IMR-90 (cell line): ENCODE measurements at regions of chr2 and their contacts with region 1.

Region 1: GRCh38 chr2:97995734-97996624 is at the start of gene TMEM131:
- DNase-seq: peak; percentile 93
- ATAC-seq: peak; percentile 95
- H3K4me3 ChIP-seq: peak within 1 kb of the TSS; percentile 87
- H3K27ac ChIP-seq: peak within 1 kb of the TSS; percentile 98
- H3K4me1 ChIP-seq: peaks cover 2% of the 10 kb centered on the region; the same call in 1 of the 2 replicates
- H3K27me3 ChIP-seq: no peaks in the 10 kb centered on the region
- CTCF ChIP-seq: no peak
- POLR2A ChIP-seq: no peak
- RAD21 ChIP-seq: 0 out of 2 replicates have a peak, but pooled peaks have one; percentile 8
- total RNA-seq, gene TMEM131: 13.3 and 18.9 TPM in 2 replicates

Region 2: GRCh38 chr2:97697252-97698235 is 298.4 kb before region 1 on chr2:
- CTCF ChIA-PET with region 1: no interaction called
- POLR2A ChIA-PET with region 1: no interaction called
- dilution Hi-C with region 1: no loop called
- in situ Hi-C with region 1: no loop called
- intact Hi-C with region 1: loop called (anchors 5 kb)
- DNase-seq: peak; percentile 69
- ATAC-seq: peak; percentile 88
- H3K4me3 ChIP-seq: no peak overlapping the region; the same call in 1 of the 2 replicates
- H3K27ac ChIP-seq: no peak overlapping the region
- H3K4me1 ChIP-seq: no peaks in the 10 kb centered on the region
- H3K27me3 ChIP-seq: no peaks in the 10 kb centered on the region; the same call in none of the 2 replicates
- CTCF ChIP-seq: peak; percentile 99
- POLR2A ChIP-seq: peak; percentile 41; the same call in 1 of the 2 replicates
- RAD21 ChIP-seq: peak; percentile 99

Region 3: DNA sequence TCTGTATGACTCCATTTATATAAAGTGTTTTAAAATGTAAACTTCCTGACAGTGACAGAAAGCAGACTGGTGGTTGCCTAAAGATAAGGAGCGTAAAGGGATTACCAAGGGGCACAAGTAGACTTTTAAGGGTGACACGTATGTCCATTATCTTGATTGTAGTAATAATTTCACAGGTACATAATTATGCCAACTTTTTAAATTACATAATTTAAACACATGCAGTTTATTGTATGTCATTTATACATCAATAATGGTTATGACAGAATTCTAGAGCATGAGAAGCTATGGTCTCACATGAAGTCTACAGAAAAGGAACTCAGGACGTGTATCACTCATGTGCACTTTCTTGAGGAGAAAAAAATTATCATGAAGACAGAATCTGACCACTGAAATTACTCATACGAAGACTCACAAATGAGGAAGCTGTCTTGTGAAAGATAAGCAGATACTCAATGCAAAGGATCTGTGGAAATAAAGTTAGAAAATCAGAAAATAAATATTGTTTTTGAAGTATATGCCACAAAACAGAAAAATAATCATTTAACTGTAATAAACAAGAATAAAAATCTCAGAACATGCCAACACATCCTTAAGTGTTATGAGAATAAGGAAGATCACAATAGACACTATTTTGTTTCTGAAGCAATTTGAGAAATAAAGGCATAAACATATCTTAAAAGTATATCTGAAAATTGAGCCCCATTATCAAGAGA is 84.6 kb before region 1 on chr2:
- CTCF ChIA-PET with region 1: no interaction called
- POLR2A ChIA-PET with region 1: no interaction called
- dilution Hi-C with region 1: no loop called
- in situ Hi-C with region 1: no loop called
- intact Hi-C with region 1: loop called (anchors 5 kb)
- DNase-seq: peak; percentile 58
- ATAC-seq: no peak
- H3K4me3 ChIP-seq: no peak overlapping the region
- H3K27ac ChIP-seq: no peak overlapping the region
- H3K4me1 ChIP-seq: peaks cover 10% of the 10 kb centered on the region
- H3K27me3 ChIP-seq: no peaks in the 10 kb centered on the region
- CTCF ChIP-seq: no peak
- POLR2A ChIP-seq: no peak
- RAD21 ChIP-seq: no peak

Region 4: DNA sequence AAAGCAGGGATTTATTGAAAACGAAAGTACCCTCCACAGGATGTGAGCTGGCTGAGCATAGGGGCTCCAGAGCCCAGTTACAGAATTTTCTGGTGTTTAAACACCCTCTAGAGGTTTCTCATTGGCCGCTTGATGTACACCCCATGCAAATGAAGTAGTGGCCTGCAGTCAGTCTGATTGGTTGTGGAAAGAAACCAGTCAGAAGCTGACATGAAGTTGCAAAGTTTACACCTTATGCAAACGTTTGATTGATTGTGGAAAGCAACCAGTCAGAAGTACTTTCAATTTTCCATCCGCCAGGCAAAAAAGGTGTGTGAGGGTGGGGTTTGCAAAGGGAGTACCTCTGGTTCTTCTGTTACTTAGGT is 153.3 kb after region 1 on chr2:
- CTCF ChIA-PET with region 1: no interaction called
- POLR2A ChIA-PET with region 1: no interaction called
- dilution Hi-C with region 1: no loop called
- in situ Hi-C with region 1: no loop called
- intact Hi-C with region 1: loop called (anchors 5 kb)
- DNase-seq: peak; percentile 62
- ATAC-seq: peak; percentile 95
- H3K4me3 ChIP-seq: peak overlapping the region; percentile 26; the same call in 1 of the 2 replicates
- H3K27ac ChIP-seq: no peak overlapping the region
- H3K4me1 ChIP-seq: no peaks in the 10 kb centered on the region
- H3K27me3 ChIP-seq: peaks cover 6% of the 10 kb centered on the region
- CTCF ChIP-seq: no peak
- POLR2A ChIP-seq: no peak
- RAD21 ChIP-seq: no peak

Region 5: GRCh38 chr2:98385050-98385699 is 389.2 kb after region 1 on chr2:
- CTCF ChIA-PET with region 1: no interaction called
- POLR2A ChIA-PET with region 1: no interaction called
- dilution Hi-C with region 1: no loop called
- in situ Hi-C with region 1: no loop called
- intact Hi-C with region 1: loop called (anchors 5 kb)
- DNase-seq: peak; percentile 71
- ATAC-seq: peak; percentile 99
- H3K4me3 ChIP-seq: no peak overlapping the region
- H3K27ac ChIP-seq: no peak overlapping the region
- H3K4me1 ChIP-seq: no peaks in the 10 kb centered on the region
- H3K27me3 ChIP-seq: peaks cover 31% of the 10 kb centered on the region
- CTCF ChIP-seq: peak; percentile 99
- POLR2A ChIP-seq: no peak
- RAD21 ChIP-seq: peak; percentile 99

Region 6: GRCh38 chr2:98676742-98677141 is 680.8 kb after region 1 on chr2:
- CTCF ChIA-PET with region 1: no interaction called
- POLR2A ChIA-PET with region 1: no interaction called
- dilution Hi-C with region 1: no loop called
- in situ Hi-C with region 1: no loop called
- intact Hi-C with region 1: no loop called
- DNase-seq: no peak
- ATAC-seq: no peak
- H3K4me3 ChIP-seq: no peak overlapping the region
- H3K27ac ChIP-seq: no peak overlapping the region
- H3K4me1 ChIP-seq: no peaks in the 10 kb centered on the region
- H3K27me3 ChIP-seq: no peaks in the 10 kb centered on the region
- CTCF ChIP-seq: no peak
- POLR2A ChIP-seq: no peak
- RAD21 ChIP-seq: no peak